ENCODE measurements at regions of chr18 and their contacts with region 1.

Region 1: DNA sequence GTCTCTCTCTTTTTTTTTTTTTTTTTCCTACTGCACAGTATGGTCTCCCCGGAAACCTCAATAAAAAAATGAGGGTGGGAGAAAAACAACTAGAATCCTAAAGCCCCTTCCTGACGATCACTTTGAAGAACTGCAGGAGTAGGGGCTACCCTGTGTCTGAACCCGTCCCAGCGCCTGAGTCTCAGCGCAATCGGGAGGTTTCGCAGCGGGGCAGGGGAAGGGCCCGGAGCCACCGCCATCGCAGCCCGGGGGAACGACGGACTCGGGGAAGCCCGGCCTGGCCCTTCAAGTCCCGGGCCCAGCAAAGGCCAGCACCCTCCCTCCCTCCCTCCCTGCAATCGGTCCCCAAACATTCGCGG is 411 bp downstream of the NARS1 start:
- DNase-seq: no peak
- H3K4me3 ChIP-seq: peak overlapping the region; percentile 85 to 86
- H3K4me3 Mint-ChIP-seq: peak overlapping the region; percentile 94 to 99 (median 96)
- H3K27ac ChIP-seq: peak overlapping the region; percentile 88
- H3K27ac Mint-ChIP-seq: peak overlapping the region; percentile 96 to 99 (median 98)
- H3K4me1 ChIP-seq: peaks cover 31% of the 10 kb centered on the region
- H3K4me1 Mint-ChIP-seq: peaks cover 17 to 41% (median 29%) of the 10 kb centered on the region in 4 donors
- H3K27me3 ChIP-seq: no peaks in the 10 kb centered on the region
- H3K27me3 Mint-ChIP-seq: no peaks in the 10 kb centered on the region

Region 2: GRCh38 chr18:56638271-56639093 is 982.7 kb before region 1 on chr18 and contains the start of gene TXNL1:
- CTCF ChIA-PET with region 1: no interaction called
- POLR2A ChIA-PET with region 1: no interaction called
- intact Hi-C with region 1: loop called (anchors 1 kb)
- DNase-seq: peak; percentile 97 to 99 (median 98)
- H3K4me3 ChIP-seq: peak within 1 kb of the TSS; percentile 64 to 93
- H3K4me3 Mint-ChIP-seq: peak within 1 kb of the TSS; percentile 95 to 100 (median 99)
- H3K27ac ChIP-seq: peak within 1 kb of the TSS; percentile 80
- H3K27ac Mint-ChIP-seq: peak within 1 kb of the TSS; percentile 89 to 99 (median 98)
- H3K4me1 ChIP-seq: peaks cover 42% of the 10 kb centered on the region
- H3K4me1 Mint-ChIP-seq: peaks cover 37 to 53% (median 45%) of the 10 kb centered on the region in 4 donors
- H3K27me3 ChIP-seq: no peaks in the 10 kb centered on the region
- H3K27me3 Mint-ChIP-seq: no peaks in the 10 kb centered on the region
- total RNA-seq, gene TXNL1: 41.4 to 42.3 TPM

Region 3: GRCh38 chr18:57586251-57587049 is 34.8 kb before region 1 on chr18 and contains the start of gene FECH:
- CTCF ChIA-PET with region 1: interaction called, 3 read pairs
- POLR2A ChIA-PET with region 1: interaction called, 13 read pairs
- intact Hi-C with region 1: loop called (anchors 1 kb)
- DNase-seq: peak; percentile 67 to 75 (median 70)
- H3K4me3 ChIP-seq: peak within 1 kb of the TSS; percentile 26 to 81
- H3K4me3 Mint-ChIP-seq: peak within 1 kb of the TSS; percentile 87 to 92 (median 88)
- H3K27ac ChIP-seq: peak within 1 kb of the TSS; percentile 56
- H3K27ac Mint-ChIP-seq: peak within 1 kb of the TSS; percentile 57 to 94 (median 86)
- H3K4me1 ChIP-seq: peaks cover 21% of the 10 kb centered on the region
- H3K4me1 Mint-ChIP-seq: peaks cover 13 to 33% (median 21%) of the 10 kb centered on the region in 4 donors
- H3K27me3 ChIP-seq: no peaks in the 10 kb centered on the region
- H3K27me3 Mint-ChIP-seq: no peaks in the 10 kb centered on the region
- total RNA-seq, gene FECH: 14.8 to 16.1 TPM

Region 4: DNA sequence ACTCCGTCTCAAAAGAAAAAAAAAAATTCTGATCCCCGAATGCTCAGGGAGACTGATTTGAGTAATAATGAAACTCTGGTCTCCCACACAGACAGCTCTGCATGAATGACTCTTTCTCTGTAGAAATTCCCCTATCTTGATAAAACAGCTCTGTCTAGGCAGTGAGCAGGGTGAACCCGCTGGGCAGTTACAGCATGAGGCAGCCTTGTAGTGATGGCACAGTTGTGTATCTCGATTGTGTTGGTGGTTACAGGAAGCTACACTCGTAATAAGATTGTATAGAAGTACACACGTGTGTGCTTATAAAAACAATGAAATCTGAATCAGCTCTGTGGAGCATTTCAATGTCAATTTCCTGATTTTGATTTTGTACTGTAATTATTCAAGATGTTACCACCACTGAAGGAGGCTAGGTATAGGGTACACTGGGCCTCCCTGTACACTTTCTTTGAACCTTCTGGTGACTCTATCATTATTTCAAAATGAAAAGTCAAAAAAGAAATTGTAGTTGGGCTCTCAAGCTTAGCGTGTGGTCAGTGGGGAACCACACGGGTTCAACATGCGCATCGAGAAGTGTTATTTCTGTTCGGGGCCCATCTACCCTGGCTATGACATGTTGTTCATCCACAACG is 216.8 kb after region 1 on chr18:
- CTCF ChIA-PET with region 1: no interaction called
- POLR2A ChIA-PET with region 1: no interaction called
- intact Hi-C with region 1: no loop called
- DNase-seq: no peak
- H3K4me3 ChIP-seq: no peak overlapping the region
- H3K4me3 Mint-ChIP-seq: peak overlapping the region in 2 of 8 donors; percentile 55 to 57
- H3K27ac ChIP-seq: no peak overlapping the region
- H3K27ac Mint-ChIP-seq: no peak overlapping the region
- H3K4me1 ChIP-seq: peaks cover 6% of the 10 kb centered on the region
- H3K4me1 Mint-ChIP-seq: peaks cover 12 to 13% (median 12%) of the 10 kb centered on the region in 4 donors
- H3K27me3 ChIP-seq: no peaks in the 10 kb centered on the region
- H3K27me3 Mint-ChIP-seq: peaks cover 0 to 10% of the 10 kb centered on the region in 2 donors

Measured in CD4-positive, alpha-beta memory T cell (primary cell).